Activated B cell treated with CpG ODN at 0.5 μM for 24 hours (primary cell): ENCODE measurements at regions of chr21 and their contacts with region 1.

Region 1: GRCh38 chr21:41933313-41934086 is 20.3 kb downstream of the C2CD2 start:
- DNase-seq: no peak
- ATAC-seq: no peak
- H3K4me3 Mint-ChIP-seq: peak overlapping the region; percentile 53
- H3K27ac Mint-ChIP-seq: no peak overlapping the region
- H3K4me1 Mint-ChIP-seq: peaks cover 40% of the 10 kb centered on the region
- H3K27me3 Mint-ChIP-seq: peaks cover 3% of the 10 kb centered on the region
- CTCF ChIP-seq: no peak

Region 2: DNA sequence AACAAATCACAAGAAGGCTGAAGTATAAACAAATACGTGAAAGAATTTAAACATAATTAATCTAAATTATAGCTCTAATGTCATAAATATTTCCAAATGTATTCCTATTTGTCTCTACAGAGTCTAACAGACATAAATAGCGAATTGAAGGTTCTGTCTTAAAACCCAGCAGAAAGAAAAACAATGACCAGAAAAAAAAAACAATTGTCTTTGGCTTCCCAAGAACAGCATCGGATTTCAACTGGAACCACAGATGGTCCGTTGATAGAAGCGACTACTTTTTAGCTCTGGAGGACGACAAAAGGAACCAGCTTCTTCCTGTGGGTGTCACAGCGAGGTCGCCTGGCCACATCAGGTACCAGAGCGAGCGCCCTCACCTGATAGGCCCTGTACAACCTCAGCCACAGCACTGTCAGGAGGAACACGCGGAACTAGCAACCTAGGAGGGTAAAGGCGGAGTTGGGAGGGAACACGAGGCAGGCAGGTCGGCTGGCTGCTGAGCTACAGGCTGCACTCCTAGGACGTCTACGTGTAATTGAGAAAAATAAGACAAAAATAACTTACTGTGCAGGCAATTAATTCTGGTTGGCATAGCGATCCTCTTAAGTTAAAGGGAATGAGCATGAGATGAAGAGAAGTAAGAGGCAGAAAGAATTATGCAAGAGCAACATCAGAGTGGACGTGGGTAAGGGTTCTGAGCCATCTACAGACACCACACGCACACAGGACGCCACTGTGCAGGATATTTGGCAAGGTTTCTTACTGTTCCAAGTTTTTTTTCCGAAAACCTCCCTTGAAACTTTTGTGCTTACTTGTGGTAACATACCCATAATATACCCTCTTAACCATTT is 37.6 kb before region 1 on chr21:
- CTCF ChIA-PET with region 1: no interaction called
- POLR2A ChIA-PET with region 1: no interaction called
- intact Hi-C with region 1: loop called (anchors 5 kb)
- DNase-seq: no peak
- ATAC-seq: peak; percentile 93
- H3K4me3 Mint-ChIP-seq: peak overlapping the region; percentile 16
- H3K27ac Mint-ChIP-seq: peak overlapping the region; percentile 26
- H3K4me1 Mint-ChIP-seq: peaks cover 11% of the 10 kb centered on the region
- H3K27me3 Mint-ChIP-seq: no peaks in the 10 kb centered on the region
- CTCF ChIP-seq: no peak

Region 3: GRCh38 chr21:42107881-42108553 is 174.5 kb after region 1 on chr21:
- CTCF ChIA-PET with region 1: interaction called, 4 read pairs
- POLR2A ChIA-PET with region 1: interaction called, 15 read pairs
- intact Hi-C with region 1: no loop called
- DNase-seq: peak; percentile 55
- ATAC-seq: peak; percentile 88
- H3K4me3 Mint-ChIP-seq: peak overlapping the region; percentile 65
- H3K27ac Mint-ChIP-seq: peak overlapping the region; percentile 61
- H3K4me1 Mint-ChIP-seq: peaks cover 28% of the 10 kb centered on the region
- H3K27me3 Mint-ChIP-seq: no peaks in the 10 kb centered on the region
- CTCF ChIP-seq: no peak

Region 4: DNA sequence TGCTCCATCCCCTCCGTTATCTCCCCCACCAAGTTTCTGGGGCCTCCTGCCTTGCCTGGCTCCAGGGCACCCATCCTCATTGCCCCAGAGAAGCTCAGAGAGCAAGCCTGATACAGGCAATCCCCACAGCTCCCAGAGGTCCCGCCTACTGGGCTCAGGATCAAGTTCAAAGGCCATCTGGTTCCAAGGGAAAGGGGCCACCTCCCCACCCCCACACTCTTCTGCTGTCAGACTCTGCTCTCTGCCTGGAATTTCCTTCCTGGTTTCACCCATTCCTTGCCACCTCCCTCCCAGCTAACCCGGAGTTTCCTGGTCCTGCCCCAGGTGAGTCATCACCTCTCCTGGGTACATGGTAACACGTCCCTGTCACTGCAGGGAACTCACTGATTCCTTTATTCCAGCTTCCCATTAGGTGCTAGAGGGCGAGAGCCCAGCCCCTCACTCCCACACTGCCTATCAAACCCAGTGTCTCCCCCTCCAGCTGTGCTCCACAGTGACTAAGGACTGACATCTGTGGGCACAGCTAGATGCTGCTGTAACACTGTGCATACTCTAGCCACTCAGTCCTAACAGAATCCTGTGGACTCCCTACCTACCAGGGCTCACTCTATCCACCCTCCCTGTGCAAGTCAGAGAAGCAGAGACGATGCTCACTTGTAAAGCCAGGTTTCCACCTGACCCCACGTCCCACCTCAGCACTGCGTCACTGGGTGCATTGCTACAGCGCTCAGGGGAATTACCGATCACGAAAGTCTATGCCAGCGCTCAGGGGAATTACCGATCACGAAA is 540.7 kb after region 1 on chr21:
- CTCF ChIA-PET with region 1: no interaction called
- POLR2A ChIA-PET with region 1: no interaction called
- intact Hi-C with region 1: no loop called
- DNase-seq: peak; percentile 36
- ATAC-seq: peak; percentile 95
- H3K4me3 Mint-ChIP-seq: peak overlapping the region; percentile 11
- H3K27ac Mint-ChIP-seq: peak overlapping the region; percentile 36
- H3K4me1 Mint-ChIP-seq: peaks cover 21% of the 10 kb centered on the region
- H3K27me3 Mint-ChIP-seq: peaks cover 12% of the 10 kb centered on the region
- CTCF ChIP-seq: no peak